BJ (cell line): ENCODE measurements at regions of chr17 and their contacts with region 1.

Region 1: GRCh38 chr17:72539981-72540897 is 419.4 kb downstream of the SOX9 start:
- DNase-seq: no peak
- H3K4me3 ChIP-seq: peak overlapping the region; percentile 20; the same call in 1 of the 2 replicates
- H3K27me3 ChIP-seq: no peaks in the 10 kb centered on the region
- CTCF ChIP-seq: peak; percentile 78

Region 2: DNA sequence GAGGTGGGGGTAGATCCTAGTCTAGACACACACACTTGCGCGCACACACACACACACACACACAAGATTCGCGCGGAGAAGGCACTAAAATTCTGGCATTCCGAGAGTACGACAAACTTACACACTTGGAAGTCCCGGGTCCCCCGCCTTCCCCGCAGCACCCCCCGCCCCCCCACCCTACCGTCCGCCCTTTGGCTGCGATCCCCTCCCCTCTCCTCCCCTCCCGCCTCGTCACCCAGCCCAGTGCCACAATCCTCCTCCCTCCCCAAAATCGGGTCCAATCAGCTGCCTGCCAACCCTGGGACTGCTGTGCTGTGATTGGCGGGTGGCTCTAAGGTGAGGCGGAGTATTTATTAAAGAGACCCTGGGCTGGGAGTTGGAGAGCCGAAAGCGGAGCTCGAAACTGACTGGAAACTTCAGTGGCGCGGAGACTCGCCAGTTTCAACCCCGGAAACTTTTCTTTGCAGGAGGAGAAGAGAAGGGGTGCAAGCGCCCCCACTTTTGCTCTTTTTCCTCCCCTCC is 419.5 kb before region 1 on chr17 and contains the start of gene SOX9:
- CTCF ChIA-PET with region 1: interaction called, 11 read pairs
- POLR2A ChIA-PET with region 1: no interaction called
- DNase-seq: peak; percentile 53
- H3K4me3 ChIP-seq: peak within 1 kb of the TSS; percentile 71
- H3K27me3 ChIP-seq: peaks cover 32% of the 10 kb centered on the region
- CTCF ChIP-seq: no peak
- polyA plus RNA-seq, gene SOX9: 0.54 and 0.60 TPM in 2 replicates

Region 3: GRCh38 chr17:72529386-72529785 is 10.9 kb before region 1 on chr17:
- CTCF ChIA-PET with region 1: interaction called, 20 read pairs
- POLR2A ChIA-PET with region 1: no interaction called
- DNase-seq: no peak
- H3K4me3 ChIP-seq: no peak overlapping the region
- H3K27me3 ChIP-seq: no peaks in the 10 kb centered on the region
- CTCF ChIP-seq: no peak

Region 4: GRCh38 chr17:72715906-72716572 is 175.8 kb after region 1 on chr17:
- CTCF ChIA-PET with region 1: no interaction called
- POLR2A ChIA-PET with region 1: interaction called, 10 read pairs
- DNase-seq: peak; percentile 95
- H3K4me3 ChIP-seq: no peak overlapping the region
- H3K27me3 ChIP-seq: no peaks in the 10 kb centered on the region
- CTCF ChIP-seq: no peak